CD8-positive, alpha-beta T cell (primary cell): ENCODE measurements at regions of chr7 and their contacts with region 1.

Region 1: DNA sequence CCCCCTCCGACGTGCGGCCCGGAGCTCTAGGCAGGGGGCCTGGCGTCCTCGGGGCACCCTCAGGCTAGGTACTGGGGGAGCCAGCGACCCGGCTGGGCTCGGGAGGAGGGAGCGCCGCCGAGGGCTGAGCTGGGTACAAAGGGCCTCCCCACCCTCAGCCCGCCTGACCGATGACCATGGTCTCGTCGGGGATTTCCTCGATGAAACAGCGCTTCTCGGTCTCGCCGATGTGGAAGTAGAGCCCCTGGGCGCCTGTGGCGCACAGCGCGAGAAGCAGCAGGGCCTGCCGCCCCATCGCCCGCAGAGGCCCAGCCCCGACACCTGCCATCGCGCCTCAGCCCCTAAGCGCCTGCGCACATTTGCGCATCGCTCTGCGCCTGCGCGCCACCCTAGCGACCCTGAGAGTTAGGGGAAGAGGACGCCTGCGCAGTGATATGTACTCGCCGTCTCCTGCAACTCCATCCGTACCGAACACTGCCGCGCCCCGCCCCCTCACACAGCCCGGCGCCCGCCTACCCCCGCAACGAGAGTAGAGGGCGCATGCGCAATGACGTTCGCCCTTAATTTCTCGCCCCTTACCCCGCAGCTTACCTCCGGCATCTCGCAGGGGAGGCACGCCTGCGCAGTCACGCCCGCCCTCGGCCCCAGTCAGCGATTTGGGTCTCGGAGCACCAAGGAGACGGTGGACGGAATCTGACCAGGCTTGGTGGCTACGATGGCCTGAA is at the start of gene TMED4:
- DNase-seq: peak; percentile 100
- ATAC-seq: peak; percentile 93
- H3K4me3 ChIP-seq: peak within 1 kb of the TSS; percentile 76 to 79
- H3K4me3 Mint-ChIP-seq: peak within 1 kb of the TSS; percentile 93
- H3K27ac ChIP-seq: peak within 1 kb of the TSS; percentile 92 to 96
- H3K27ac Mint-ChIP-seq: peak within 1 kb of the TSS; percentile 98
- H3K4me1 ChIP-seq: peaks cover 26% of the 10 kb centered on the region
- H3K4me1 Mint-ChIP-seq: peaks cover 33% of the 10 kb centered on the region
- H3K27me3 ChIP-seq: no peaks in the 10 kb centered on the region
- H3K27me3 Mint-ChIP-seq: no peaks in the 10 kb centered on the region
- CTCF ChIP-seq: no peak
- total RNA-seq, gene TMED4: 115 to 120 TPM

Region 2: DNA sequence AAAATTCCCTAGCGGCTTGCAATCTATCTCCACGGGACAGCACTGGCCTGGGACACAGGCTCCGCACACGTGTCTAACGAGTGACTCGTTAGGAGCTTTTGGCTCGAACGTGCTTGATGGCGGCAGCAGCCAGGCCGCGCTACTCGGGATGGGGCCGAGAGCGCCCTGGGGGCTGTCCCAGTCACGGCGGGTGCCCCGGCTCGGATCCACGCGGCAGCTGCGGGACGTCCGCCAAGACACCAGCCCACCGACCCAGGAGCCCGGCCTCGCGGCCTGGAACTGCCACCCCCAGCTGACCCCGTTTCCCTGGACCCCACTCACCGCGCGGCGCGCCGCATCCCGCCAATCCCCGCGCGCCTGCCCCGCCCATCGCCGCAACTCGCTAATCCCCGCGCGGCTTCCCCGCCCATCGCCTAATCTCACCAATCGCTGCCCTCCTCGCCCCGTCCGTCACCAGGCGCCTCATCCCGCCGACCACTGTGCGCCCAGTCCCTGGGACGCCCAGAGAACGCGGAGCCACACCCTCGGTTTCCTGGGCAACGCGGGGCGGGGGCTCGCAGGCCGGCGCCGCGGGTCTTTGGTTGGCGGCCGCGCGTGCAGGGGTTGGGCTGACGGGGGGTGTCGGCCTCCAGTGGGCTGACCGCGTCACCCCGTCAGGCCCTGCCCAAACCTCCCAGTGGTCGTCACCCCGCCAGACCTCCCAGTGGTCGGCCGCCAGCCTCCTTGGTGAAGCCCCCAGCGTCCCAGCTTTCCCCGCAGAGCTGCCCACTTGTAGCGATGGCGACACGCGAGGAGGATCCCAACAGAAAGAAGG is 458.6 kb before region 1 on chr7 and contains the start of gene POLD2:
- CTCF ChIA-PET with region 1: no interaction called
- POLR2A ChIA-PET with region 1: no interaction called
- intact Hi-C with region 1: loop called in 1 of 2 experiments (anchors 10 kb)
- DNase-seq: peak; percentile 93 to 98 (median 97)
- ATAC-seq: peak; percentile 98
- H3K4me3 ChIP-seq: peak within 1 kb of the TSS; percentile 78 to 83
- H3K4me3 Mint-ChIP-seq: peak within 1 kb of the TSS; percentile 93
- H3K27ac ChIP-seq: peak within 1 kb of the TSS; percentile 75 to 79
- H3K27ac Mint-ChIP-seq: peak within 1 kb of the TSS; percentile 66
- H3K4me1 ChIP-seq: peaks cover 12% of the 10 kb centered on the region
- H3K4me1 Mint-ChIP-seq: peaks cover 34% of the 10 kb centered on the region
- H3K27me3 ChIP-seq: no peaks in the 10 kb centered on the region
- H3K27me3 Mint-ChIP-seq: no peaks in the 10 kb centered on the region
- CTCF ChIP-seq: no peak
- total RNA-seq, gene POLD2: 44.0 to 48.9 TPM

Region 3: DNA sequence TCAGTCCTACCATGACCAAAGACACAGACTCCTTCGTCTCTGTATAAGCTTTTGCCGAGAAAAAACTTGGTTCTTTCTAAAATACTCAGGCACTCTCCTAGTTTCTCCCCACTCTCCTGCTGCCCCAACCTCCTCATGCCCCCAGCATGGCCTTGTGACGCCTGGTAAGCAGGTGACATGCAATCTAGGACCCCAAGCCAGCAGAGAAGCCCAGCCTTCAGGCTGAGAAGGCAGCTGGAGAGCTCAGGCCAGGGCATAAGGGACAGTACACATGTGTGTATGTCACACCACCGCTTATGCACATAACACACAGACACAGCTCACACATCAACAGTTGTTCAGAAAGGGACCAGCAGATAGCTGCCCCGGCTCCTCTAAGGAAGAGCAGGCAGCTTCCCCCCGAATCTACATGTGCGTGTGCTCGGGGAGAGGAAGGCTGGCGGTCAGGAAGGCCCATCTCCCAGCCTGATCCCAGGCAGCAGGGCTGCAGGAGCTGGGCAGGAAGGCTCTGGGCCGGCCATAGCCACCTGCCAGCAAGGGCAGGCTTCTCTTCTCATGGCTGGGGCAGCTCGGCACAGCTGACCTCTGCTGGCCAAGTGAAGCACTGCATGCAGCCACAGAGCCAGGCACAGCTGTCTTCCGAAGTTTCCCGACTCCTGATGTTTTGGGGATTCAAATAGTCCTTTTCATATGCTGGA is 16.8 kb before region 1 on chr7:
- CTCF ChIA-PET with region 1: interaction called, 23 read pairs
- POLR2A ChIA-PET with region 1: interaction called, 7 read pairs
- intact Hi-C with region 1: no loop called
- DNase-seq: peak; percentile 40 to 78 (median 65)
- ATAC-seq: peak; percentile 97
- H3K4me3 ChIP-seq: no peak overlapping the region
- H3K4me3 Mint-ChIP-seq: no peak overlapping the region
- H3K27ac ChIP-seq: no peak overlapping the region
- H3K27ac Mint-ChIP-seq: no peak overlapping the region
- H3K4me1 ChIP-seq: no peaks in the 10 kb centered on the region
- H3K4me1 Mint-ChIP-seq: peaks cover 10% of the 10 kb centered on the region
- H3K27me3 ChIP-seq: no peaks in the 10 kb centered on the region
- H3K27me3 Mint-ChIP-seq: no peaks in the 10 kb centered on the region
- CTCF ChIP-seq: peak; percentile 93

Region 4: GRCh38 chr7:44633254-44634186 is 51.5 kb after region 1 on chr7:
- CTCF ChIA-PET with region 1: no interaction called
- POLR2A ChIA-PET with region 1: interaction called, 10 read pairs
- intact Hi-C with region 1: loop called (anchors 1 to 2 kb)
- DNase-seq: peak in 5 of 9 experiments; percentile 50 to 85 (median 77)
- ATAC-seq: peak; percentile 42
- H3K4me3 ChIP-seq: no peak overlapping the region
- H3K4me3 Mint-ChIP-seq: peak overlapping the region; percentile 22
- H3K27ac ChIP-seq: peak overlapping the region; percentile 35 to 74
- H3K27ac Mint-ChIP-seq: peak overlapping the region; percentile 99
- H3K4me1 ChIP-seq: peaks cover 75% of the 10 kb centered on the region
- H3K4me1 Mint-ChIP-seq: peaks cover 83% of the 10 kb centered on the region
- H3K27me3 ChIP-seq: no peaks in the 10 kb centered on the region
- H3K27me3 Mint-ChIP-seq: no peaks in the 10 kb centered on the region
- CTCF ChIP-seq: no peak

Region 5: DNA sequence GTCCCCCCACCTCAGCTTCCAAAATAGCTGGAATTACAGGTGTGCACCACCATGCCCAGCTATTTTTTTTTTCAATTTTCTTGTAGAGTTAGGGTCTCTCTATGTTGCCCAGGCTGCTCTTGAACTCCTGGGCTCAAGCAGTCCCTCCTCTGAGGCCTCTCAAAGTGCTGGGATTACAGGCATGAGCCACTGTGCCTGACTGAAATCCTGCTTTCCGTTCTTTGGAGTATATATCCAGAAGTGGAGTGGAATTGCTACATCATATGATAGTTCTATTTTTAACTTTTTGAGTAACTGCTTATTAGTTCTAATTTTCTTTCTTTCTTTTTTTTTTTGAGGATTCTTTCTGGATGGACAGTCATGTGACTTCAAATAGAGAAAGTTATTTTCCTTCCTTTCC is 103.7 kb after region 1 on chr7:
- CTCF ChIA-PET with region 1: no interaction called
- POLR2A ChIA-PET with region 1: no interaction called
- intact Hi-C with region 1: loop called in 1 of 2 experiments (anchors 10 kb)
- DNase-seq: no peak
- ATAC-seq: no peak
- H3K4me3 ChIP-seq: no peak overlapping the region
- H3K4me3 Mint-ChIP-seq: no peak overlapping the region
- H3K27ac ChIP-seq: no peak overlapping the region
- H3K27ac Mint-ChIP-seq: peak overlapping the region; percentile 7
- H3K4me1 ChIP-seq: no peaks in the 10 kb centered on the region
- H3K4me1 Mint-ChIP-seq: no peaks in the 10 kb centered on the region
- H3K27me3 ChIP-seq: no peaks in the 10 kb centered on the region
- H3K27me3 Mint-ChIP-seq: no peaks in the 10 kb centered on the region
- CTCF ChIP-seq: no peak

Region 6: DNA sequence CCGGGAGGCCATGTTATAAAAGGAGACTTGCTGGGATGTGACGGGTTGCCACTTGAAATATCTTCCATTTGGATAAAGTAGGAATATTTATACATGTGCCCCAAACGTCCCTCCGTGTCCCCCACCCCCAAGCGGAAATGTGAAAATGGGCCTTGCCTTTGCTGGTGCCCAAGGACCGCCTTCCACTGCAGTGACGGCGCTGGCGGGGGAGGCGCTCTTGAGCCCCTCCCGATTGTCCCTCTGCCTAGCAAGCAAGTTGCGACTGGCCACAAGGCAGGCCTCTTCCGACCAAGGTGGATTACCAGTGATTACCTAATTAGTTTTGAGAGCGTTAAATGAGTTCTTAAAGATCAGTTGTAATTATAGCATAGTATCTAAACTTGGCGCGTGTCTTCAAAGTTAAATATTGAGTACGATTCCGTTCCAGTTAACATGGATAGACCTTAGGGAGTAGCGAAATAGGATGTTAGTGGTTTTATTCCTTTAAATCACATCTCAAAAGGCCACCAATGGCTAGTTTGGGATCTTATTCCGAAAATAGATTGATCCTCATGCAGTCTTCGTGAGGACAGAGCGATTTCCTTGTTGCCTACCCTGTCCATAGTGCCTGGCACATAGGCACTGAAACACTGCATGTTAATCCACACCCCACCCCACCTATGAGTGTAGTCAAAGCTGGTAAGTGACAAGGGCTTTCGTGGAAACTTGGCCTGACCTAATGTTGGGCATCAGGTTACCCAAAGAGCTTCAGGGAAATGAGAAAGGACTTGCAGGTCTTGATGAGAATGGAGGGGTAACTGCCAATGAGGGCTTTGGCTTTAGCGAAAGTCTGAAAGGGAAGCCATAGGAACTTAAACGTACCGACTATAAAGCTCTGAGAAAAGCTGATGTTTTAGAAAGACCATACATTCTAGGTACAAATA is 215.5 kb after region 1 on chr7:
- CTCF ChIA-PET with region 1: no interaction called
- POLR2A ChIA-PET with region 1: interaction called, 12 read pairs
- intact Hi-C with region 1: loop called (anchors 1 kb)
- DNase-seq: peak; percentile 64 to 92 (median 82)
- ATAC-seq: peak; percentile 61
- H3K4me3 ChIP-seq: peak overlapping the region; percentile 97 to 98
- H3K4me3 Mint-ChIP-seq: peak overlapping the region; percentile 92
- H3K27ac ChIP-seq: peak overlapping the region; percentile 97 to 99
- H3K27ac Mint-ChIP-seq: peak overlapping the region; percentile 96
- H3K4me1 ChIP-seq: peaks cover 22% of the 10 kb centered on the region
- H3K4me1 Mint-ChIP-seq: peaks cover 44% of the 10 kb centered on the region
- H3K27me3 ChIP-seq: no peaks in the 10 kb centered on the region
- H3K27me3 Mint-ChIP-seq: no peaks in the 10 kb centered on the region
- CTCF ChIP-seq: no peak

Region 7: GRCh38 chr7:44980393-44981034 is 398.5 kb after region 1 on chr7:
- CTCF ChIA-PET with region 1: no interaction called
- POLR2A ChIA-PET with region 1: no interaction called
- intact Hi-C with region 1: loop called (anchors 5 kb)
- DNase-seq: peak in 6 of 9 experiments; percentile 40 to 95 (median 76)
- ATAC-seq: peak; percentile 43
- H3K4me3 ChIP-seq: no peak overlapping the region
- H3K4me3 Mint-ChIP-seq: peak overlapping the region; percentile 94
- H3K27ac ChIP-seq: peak overlapping the region; percentile 78 to 86
- H3K27ac Mint-ChIP-seq: peak overlapping the region; percentile 99
- H3K4me1 ChIP-seq: peaks cover 72% of the 10 kb centered on the region
- H3K4me1 Mint-ChIP-seq: peaks cover 80% of the 10 kb centered on the region
- H3K27me3 ChIP-seq: no peaks in the 10 kb centered on the region
- H3K27me3 Mint-ChIP-seq: no peaks in the 10 kb centered on the region
- CTCF ChIP-seq: no peak